WTC11 (cell line): ENCODE measurements at regions of chr3 and their contacts with region 1.

Region 1: GRCh38 chr3:147397155-147397874 is 9.0 kb downstream of the ZIC4 start:
- DNase-seq: peak; percentile 85
- ATAC-seq: peak; percentile 43
- H3K4me3 Mint-ChIP-seq: peak overlapping the region; percentile 78
- H3K27ac Mint-ChIP-seq: peak overlapping the region; percentile 96
- H3K4me1 Mint-ChIP-seq: peaks cover 79% of the 10 kb centered on the region
- H3K27me3 Mint-ChIP-seq: peaks cover 98% of the 10 kb centered on the region
- CTCF ChIP-seq: no peak

Region 2: DNA sequence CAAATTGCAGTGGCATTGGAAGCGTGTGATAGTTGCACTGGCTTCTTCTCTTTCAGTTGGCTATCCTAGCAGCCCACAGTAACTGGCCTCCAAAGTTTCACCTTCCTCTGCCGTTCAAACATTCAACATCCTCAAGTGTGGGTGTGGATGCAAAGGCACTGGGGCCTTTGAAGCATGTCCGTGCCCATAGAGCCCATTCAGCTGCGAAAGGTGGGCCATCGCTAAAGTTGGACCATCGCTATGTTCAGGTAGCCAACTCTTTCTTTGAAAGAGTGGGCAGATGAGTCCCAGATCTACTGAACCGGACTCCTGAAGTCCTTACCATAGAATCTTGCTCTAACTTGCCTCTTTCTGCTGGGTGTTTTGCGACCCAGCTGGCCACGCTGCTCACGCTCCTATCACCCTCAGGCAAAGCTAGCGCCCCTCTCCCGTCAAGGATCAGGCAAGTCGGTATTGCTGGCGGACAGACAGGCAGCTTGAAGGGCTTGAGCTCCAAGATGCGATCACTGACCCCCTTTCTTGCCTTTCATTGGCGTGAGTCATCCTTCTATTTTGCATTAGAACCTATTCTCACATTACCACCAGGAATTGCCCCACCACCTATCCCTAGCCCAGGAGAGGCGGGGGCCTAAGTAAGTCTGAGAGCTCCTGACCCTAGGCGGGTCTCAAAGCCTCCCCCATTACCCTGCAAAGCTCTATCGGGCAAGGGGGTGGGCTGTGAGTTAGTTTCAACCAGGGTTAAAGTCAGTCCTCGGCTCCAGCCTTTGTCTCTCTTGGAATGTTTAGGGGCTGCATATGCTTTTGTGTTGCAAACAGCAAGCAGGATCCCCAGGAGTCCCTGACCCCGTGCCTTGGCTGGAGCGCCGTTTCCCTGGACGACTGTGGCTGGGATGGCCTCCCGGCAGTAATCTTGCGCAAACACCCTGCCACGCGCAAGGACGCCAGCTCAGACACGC is 19.6 kb before region 1 on chr3:
- CTCF ChIA-PET with region 1: interaction called, 47 read pairs
- POLR2A ChIA-PET with region 1: interaction called, 19 read pairs
- DNase-seq: peak; percentile 76
- ATAC-seq: peak; percentile 93
- H3K4me3 Mint-ChIP-seq: peak overlapping the region; percentile 85
- H3K27ac Mint-ChIP-seq: peak overlapping the region; percentile 95
- H3K4me1 Mint-ChIP-seq: peaks cover 70% of the 10 kb centered on the region
- H3K27me3 Mint-ChIP-seq: peaks cover 97% of the 10 kb centered on the region
- CTCF ChIP-seq: no peak

Region 3: DNA sequence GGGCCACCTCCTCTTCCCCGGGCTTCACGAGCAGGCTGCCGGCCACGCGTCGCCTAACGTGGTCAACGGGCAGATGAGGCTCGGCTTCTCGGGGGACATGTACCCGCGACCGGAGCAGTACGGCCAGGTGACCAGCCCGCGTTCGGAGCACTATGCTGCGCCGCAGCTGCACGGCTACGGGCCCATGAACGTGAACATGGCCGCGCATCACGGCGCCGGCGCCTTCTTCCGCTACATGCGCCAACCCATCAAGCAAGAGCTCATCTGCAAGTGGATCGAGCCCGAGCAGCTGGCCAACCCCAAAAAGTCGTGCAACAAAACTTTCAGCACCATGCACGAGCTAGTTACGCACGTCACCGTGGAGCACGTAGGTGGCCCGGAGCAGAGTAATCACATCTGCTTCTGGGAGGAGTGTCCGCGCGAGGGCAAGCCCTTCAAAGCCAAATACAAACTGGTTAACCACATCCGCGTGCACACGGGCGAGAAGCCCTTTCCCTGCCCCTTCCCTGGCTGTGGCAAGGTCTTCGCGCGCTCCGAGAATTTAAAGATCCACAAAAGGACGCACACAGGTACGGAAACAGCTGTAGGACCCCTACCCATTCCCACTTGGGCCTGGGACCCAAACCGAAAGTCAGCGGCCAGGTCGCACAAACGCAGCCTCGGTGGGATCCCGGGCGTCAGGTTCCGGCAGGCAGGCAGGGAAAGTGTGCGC is 13.4 kb after region 1 on chr3:
- CTCF ChIA-PET with region 1: interaction called, 37 read pairs
- POLR2A ChIA-PET with region 1: interaction called, 23 read pairs
- DNase-seq: peak; percentile 44
- ATAC-seq: peak; percentile 3; the same call in 1 of the 2 replicates
- H3K4me3 Mint-ChIP-seq: peak overlapping the region; percentile 73
- H3K27ac Mint-ChIP-seq: peak overlapping the region; percentile 15; the same call in 1 of the 2 replicates
- H3K4me1 Mint-ChIP-seq: peaks cover 76% of the 10 kb centered on the region
- H3K27me3 Mint-ChIP-seq: peaks cover 99% of the 10 kb centered on the region
- CTCF ChIP-seq: no peak

Region 4: GRCh38 chr3:147418808-147419701 is 21.7 kb after region 1 on chr3:
- CTCF ChIA-PET with region 1: interaction called, 17 read pairs
- POLR2A ChIA-PET with region 1: interaction called, 13 read pairs
- DNase-seq: peak; percentile 94
- ATAC-seq: peak; percentile 58
- H3K4me3 Mint-ChIP-seq: peak overlapping the region; percentile 73
- H3K27ac Mint-ChIP-seq: peak overlapping the region; percentile 72; the same call in 1 of the 2 replicates
- H3K4me1 Mint-ChIP-seq: peaks cover 91% of the 10 kb centered on the region
- H3K27me3 Mint-ChIP-seq: peaks cover 100% of the 10 kb centered on the region
- CTCF ChIP-seq: no peak

Region 5: GRCh38 chr3:147518465-147518864 is 121.2 kb after region 1 on chr3:
- CTCF ChIA-PET with region 1: no interaction called
- POLR2A ChIA-PET with region 1: no interaction called
- DNase-seq: no peak
- ATAC-seq: no peak; the same call in 1 of the 2 replicates
- H3K4me3 Mint-ChIP-seq: no peak overlapping the region
- H3K27ac Mint-ChIP-seq: no peak overlapping the region
- H3K4me1 Mint-ChIP-seq: peaks cover 24% of the 10 kb centered on the region
- H3K27me3 Mint-ChIP-seq: no peaks in the 10 kb centered on the region
- CTCF ChIP-seq: no peak